Heart left ventricle (tissue), 16 donors: ENCODE measurements at regions of chr4 and their contacts with region 1.

Region 1: DNA sequence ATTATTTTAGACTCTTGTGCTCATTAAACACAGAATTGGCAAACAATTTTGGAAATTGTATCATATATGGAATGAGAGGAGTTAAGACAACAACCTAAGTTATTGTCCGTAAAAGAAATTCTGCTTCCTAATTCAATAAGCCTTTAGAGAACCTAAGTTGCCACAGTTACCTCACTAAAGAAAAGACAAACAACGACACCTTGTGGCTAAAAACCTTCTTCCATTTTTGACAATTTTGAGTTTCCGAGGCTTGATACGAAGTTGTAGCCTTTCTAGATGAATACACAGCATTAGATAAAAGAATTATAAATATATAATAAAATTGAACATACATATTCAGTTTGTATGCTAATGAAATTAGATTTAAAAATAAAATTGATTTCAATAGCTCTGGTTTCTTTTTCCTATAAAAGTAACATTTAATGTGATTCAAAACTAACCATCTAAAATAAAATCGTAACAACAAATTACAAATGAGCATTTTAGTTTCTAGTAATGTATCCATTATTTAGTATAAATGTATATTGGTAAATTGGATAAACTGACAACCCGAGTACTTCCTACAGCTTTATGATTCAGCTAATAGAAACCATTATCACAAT is 275.1 kb downstream of the GPM6A start:
- DNase-seq: no peak
- ATAC-seq: no peak
- H3K4me3 ChIP-seq: no peak overlapping the region
- H3K27ac ChIP-seq: no peak overlapping the region
- H3K4me1 ChIP-seq: no peaks in the 10 kb centered on the region
- H3K27me3 ChIP-seq: no peaks in the 10 kb centered on the region
- CTCF ChIP-seq: peak; percentile 12 to 64 (median 41)
- POLR2A ChIP-seq: no peak

Region 2: DNA sequence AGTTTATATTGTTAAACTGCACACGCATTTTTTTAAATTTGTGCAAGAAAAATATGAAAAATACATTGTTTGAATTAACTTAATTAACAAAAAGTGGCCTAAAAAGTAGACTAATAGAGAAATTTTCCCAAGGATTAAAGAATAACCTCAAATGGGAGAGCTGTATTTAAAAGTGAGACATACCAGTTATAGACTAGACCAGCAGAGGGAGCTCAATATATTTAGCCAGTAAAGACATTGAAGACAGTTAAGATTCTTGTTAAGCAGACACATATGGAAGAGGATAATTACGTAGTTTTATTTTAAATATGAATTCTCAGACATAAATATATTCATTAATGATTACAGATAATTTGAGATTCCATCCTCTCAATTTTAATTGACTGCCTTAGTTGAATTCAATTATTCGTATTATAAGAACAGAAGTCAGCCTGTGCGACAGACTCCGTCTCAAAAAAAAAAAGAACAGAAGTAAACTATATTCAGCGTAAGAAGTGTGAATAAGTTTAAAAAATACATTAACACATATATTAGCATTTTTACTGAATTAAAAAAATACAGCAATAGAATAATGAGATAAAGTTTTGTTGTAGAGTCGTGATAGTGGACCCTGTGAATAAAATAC is 772.7 kb before region 1 on chr4:
- intact Hi-C with region 1: loop called in 7 of 10 experiments (anchors 2 to 10 kb)
- DNase-seq: no peak
- ATAC-seq: no peak
- H3K4me3 ChIP-seq: no peak overlapping the region
- H3K27ac ChIP-seq: no peak overlapping the region
- H3K4me1 ChIP-seq: no peaks in the 10 kb centered on the region
- H3K27me3 ChIP-seq: no peaks in the 10 kb centered on the region
- CTCF ChIP-seq: peak; percentile 20 to 71 (median 50)
- POLR2A ChIP-seq: no peak

Region 3: DNA sequence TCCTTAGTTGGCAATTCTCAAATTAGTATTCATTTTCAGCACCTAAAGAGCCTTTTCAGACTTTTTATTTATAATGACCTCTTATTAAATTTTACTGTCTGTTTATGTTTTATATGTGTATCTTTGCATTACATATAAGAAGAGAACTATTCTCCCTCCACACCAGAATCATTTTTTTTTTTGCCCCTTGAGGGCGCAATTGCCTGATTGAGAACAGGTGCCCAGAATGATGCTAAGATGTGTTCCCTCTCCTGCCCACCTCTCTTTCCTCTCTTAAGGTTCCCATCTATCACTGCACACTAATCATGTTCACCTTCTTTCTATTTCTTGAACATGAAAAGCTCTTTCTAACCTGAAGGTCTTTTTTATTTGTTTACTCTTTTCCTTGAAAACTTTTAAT is 663.0 kb before region 1 on chr4:
- intact Hi-C with region 1: loop called in 1 of 10 experiments (anchors 10 kb)
- DNase-seq: no peak
- ATAC-seq: no peak
- H3K4me3 ChIP-seq: no peak overlapping the region
- H3K27ac ChIP-seq: no peak overlapping the region
- H3K4me1 ChIP-seq: no peaks in the 10 kb centered on the region
- H3K27me3 ChIP-seq: no peaks in the 10 kb centered on the region
- CTCF ChIP-seq: peak in 2 of 12 donors; percentile 9 to 27
- POLR2A ChIP-seq: no peak